Heart right ventricle (tissue), 16 donors: ENCODE measurements at regions of chr3 and their contacts with region 1.

Region 1: GRCh38 chr3:146156095-146156494 is 4.9 kb downstream of the PLOD2 start:
- DNase-seq: no peak
- ATAC-seq: peak in 3 of 8 donors; percentile 29 to 45 (median 30)
- H3K4me3 ChIP-seq: peak overlapping the region in 9 of 10 donors; percentile 10 to 74 (median 24)
- H3K27ac ChIP-seq: peak overlapping the region; percentile 73 to 98 (median 93)
- H3K4me1 ChIP-seq: peaks cover 0 to 81% (median 55%) of the 10 kb centered on the region in 9 donors
- H3K27me3 ChIP-seq: peaks cover 0 to 13% (median 0%) of the 10 kb centered on the region in 7 donors
- CTCF ChIP-seq: no peak

Region 2: GRCh38 chr3:146093932-146094583 is 62.0 kb before region 1 on chr3:
- intact Hi-C with region 1: loop called in 1 of 10 experiments (anchors 5 kb)
- DNase-seq: no peak
- ATAC-seq: peak in 6 of 8 donors; percentile 41 to 67 (median 62)
- H3K4me3 ChIP-seq: no peak overlapping the region
- H3K27ac ChIP-seq: peak overlapping the region in 1 of 10 donors; percentile 46
- H3K4me1 ChIP-seq: peaks cover 0 to 37% (median 9%) of the 10 kb centered on the region in 9 donors
- H3K27me3 ChIP-seq: no peaks in the 10 kb centered on the region
- CTCF ChIP-seq: no peak

Region 3: GRCh38 chr3:147141516-147142288 is 985.6 kb after region 1 on chr3:
- intact Hi-C with region 1: no loop called
- DNase-seq: no peak
- ATAC-seq: no peak
- H3K4me3 ChIP-seq: no peak overlapping the region
- H3K27ac ChIP-seq: no peak overlapping the region
- H3K4me1 ChIP-seq: no peaks in the 10 kb centered on the region
- H3K27me3 ChIP-seq: peaks cover 0 to 4% (median 0%) of the 10 kb centered on the region in 7 donors
- CTCF ChIP-seq: no peak